ENCODE measurements at regions of chr13 and their contacts with region 1.

Region 1: DNA sequence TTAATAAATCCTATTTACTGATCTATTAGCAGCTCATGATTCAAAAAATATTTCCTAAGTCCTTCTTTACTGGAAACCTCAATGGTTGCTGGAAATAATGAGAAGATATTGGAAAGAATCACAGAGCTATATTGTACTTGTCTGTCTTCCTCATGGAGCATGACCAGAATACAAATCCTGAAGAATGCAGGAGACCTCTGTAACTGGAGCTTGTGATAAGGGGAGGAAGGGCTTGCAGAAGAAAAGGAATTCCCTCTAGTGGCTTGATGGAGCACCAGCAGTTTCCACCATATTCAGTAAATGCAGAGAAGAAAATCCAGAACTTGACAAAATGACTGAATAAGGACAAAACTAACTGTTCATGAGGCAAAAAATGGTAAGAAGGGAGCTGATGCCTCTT is 1333.1 kb downstream of the EFNB2 start:
- DNase-seq: no peak
- ATAC-seq: no peak
- H3K4me3 ChIP-seq: no peak overlapping the region
- H3K27ac ChIP-seq: no peak overlapping the region
- H3K4me1 ChIP-seq: no peaks in the 10 kb centered on the region
- H3K27me3 ChIP-seq: no peaks in the 10 kb centered on the region
- CTCF ChIP-seq: peak in 7 of 9 donors; percentile 38 to 64 (median 49)

Region 2: DNA sequence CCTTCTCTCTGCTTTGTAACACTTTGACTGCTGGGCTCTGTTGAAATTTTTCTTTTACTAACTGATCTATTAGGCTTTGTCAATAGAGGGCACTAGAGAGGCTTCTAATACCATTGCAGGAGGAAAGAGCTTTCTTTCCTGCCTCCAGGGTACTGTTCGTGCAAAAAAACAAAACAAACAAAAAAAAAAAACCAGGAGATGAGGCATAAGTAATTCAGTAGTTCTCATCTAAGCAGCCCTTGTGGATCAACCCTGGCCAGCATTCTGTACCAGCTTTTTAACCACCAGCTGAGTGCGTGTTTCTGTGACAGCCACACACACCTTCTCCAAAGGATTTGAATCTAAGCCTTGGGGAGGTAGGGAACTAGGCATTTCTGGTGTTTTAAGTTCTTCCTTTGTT is 428.6 kb before region 1 on chr13:
- intact Hi-C with region 1: loop called in 1 of 10 experiments (anchors 10 kb)
- DNase-seq: no peak
- ATAC-seq: no peak
- H3K4me3 ChIP-seq: no peak overlapping the region
- H3K27ac ChIP-seq: no peak overlapping the region
- H3K4me1 ChIP-seq: no peaks in the 10 kb centered on the region
- H3K27me3 ChIP-seq: no peaks in the 10 kb centered on the region
- CTCF ChIP-seq: peak; percentile 27 to 70 (median 53)